ENCODE measurements at regions of chr17 and their contacts with region 1.

Region 1: GRCh38 chr17:7740481-7741001 is 23.0 kb downstream of the DNAH2 start:
- DNase-seq: no peak

Region 2: DNA sequence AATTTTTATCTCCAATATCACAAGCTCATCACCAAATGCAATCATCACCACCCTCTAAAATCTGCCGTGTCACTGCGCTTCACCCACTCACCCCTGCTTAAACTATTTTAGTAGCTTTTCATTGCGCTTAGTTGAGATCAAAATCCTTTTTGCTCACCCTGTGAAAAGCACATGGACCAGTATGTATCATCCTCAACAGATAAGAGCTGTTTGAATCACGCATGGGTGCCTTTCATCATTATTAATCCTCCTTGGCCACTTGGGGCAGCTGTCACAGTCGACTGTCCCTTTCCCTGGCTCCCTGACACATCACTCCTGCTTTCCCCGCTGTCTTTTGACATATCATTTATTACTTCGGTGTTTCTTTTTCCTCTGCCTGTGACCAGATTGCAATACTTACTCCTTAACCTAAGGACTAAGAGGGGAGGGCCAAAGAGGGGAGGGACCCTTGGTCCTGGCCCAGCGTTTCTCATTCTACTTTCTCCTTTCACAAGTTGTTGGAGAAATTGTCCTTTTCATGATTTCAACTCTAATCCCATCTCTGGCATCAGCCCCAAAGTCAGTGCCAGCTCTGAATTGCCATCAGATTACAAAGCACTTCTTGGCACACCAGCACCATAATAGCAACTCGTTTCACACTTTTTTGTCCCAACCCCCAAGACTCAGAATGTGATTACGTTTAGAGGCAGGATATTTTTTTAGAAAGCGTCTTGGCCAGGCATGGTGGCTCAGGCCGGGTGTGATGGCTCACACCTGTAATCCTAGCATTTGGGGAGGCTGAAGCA is 84.9 kb after region 1 on chr17:
- intact Hi-C with region 1: loop called (anchors 5 kb)
- DNase-seq: no peak

Region 3: DNA sequence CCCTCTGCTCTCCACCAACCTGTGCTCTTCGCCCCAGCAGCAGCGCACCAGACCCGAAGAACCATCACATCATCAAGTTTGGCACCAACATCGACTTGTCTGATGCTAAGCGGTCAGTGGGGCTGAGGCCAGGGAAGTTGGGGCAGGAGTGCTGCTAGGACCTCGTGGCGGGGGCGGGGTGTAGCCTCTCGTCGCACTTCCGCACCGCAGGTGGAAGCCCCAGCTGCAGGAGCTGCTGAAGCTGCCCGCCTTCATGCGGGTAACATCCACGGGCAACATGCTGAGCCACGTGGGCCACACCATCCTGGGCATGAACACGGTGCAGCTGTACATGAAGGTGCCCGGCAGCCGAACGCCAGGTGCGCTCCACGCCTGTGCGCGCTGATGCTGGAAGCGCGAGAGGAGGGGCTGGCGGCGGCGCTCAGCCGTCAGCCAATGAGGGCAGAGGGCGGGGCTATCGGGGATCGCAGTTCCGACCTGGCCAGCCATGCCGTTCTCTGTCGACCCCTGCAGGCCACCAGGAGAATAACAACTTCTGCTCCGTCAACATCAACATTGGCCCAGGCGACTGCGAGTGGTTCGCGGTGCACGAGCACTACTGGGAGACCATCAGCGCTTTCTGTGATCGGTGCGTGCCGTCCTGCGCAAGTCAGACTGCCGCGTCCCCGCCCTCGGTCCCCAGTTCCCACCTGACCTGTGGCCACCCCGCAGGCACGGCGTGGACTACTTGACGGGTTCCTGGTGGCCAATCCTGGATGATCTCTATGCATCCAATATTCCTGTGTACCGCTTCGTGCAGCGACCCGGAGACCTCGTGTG is 111.1 kb after region 1 on chr17:
- intact Hi-C with region 1: loop called (anchors 5 kb)
- DNase-seq: peak; percentile 95

Region 4: DNA sequence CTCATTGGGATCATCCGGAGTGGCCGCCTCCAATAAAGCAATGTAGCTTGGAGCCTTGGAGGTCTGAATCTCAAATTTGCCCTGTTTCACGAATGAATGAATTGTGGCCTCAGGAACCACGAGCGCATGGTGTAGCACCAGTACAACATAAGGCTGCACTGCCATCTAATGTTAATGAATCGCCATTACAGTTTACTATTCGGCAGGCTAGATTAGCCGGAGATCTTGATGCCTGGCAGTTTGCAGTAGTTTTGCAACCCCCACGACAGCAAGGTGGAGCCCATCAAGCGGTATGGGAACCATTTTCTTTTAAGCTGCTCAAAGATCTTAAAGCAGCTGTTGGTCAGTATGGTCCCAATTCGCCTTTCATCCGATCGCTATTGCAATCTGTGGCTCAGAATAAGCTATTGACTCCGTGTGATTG is 317.2 kb after region 1 on chr17:
- intact Hi-C with region 1: loop called (anchors 5 kb)
- DNase-seq: peak; percentile 64